Activated CD4-positive, alpha-beta memory T cell treated with anti-CD3 and anti-CD28 coated beads for 36 hours (primary cell): ENCODE measurements at regions of chr1 and their contacts with region 1.

Region 1: DNA sequence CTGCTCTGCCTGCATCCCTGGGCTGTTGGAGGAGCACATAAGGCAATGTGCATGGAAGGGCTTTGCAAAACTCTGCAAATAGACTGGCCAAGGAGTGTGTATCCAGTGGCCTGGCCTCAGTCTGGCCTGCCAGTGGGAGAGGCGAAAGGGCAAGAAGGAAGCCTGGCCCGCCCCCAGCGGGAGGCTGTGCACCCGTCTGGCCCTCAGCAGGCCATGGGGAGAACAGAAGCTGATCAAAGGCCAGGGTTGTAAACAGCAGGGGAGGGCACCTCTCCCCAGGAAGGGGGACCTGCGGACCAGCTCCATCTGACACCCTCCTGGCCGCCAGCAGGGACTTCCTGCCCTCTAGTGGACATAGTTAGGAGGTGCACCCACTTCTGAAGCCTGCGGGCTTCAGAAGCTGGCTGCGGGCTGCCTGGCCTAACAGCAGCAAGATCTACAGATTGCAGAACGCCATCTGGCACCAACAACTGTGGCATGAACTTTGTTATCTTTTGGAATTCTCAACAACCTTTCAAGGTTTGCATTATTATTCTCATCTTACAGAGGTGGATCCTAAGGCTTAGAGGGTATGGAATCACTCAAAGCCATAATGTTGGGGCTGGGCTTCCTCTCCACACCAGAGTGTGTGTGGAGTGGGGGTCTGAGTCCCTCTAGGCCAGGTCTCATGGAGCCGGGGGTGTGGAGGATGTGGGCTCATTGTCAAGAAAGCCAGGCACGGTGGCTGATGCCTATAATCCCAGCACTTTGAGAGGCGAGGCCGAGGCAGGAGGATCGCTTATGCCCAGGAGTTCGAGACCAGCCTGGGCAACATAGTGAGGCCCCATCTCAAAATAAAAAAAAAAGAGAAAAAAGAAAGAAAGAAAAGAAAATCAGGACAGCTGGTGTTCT is 18.9 kb upstream of the CDK18 start:
- DNase-seq: peak; percentile 75
- H3K4me3 Mint-ChIP-seq: peak overlapping the region; percentile 25
- H3K27ac Mint-ChIP-seq: no peak overlapping the region
- H3K4me1 Mint-ChIP-seq: peaks cover 10% of the 10 kb centered on the region
- H3K27me3 Mint-ChIP-seq: peaks cover 22% of the 10 kb centered on the region

Region 2: GRCh38 chr1:205273551-205273982 is 212.0 kb before region 1 on chr1:
- CTCF ChIA-PET with region 1: interaction called, 26 read pairs
- POLR2A ChIA-PET with region 1: no interaction called
- intact Hi-C with region 1: loop called (anchors 5 kb)
- DNase-seq: peak; percentile 91
- H3K4me3 Mint-ChIP-seq: no peak overlapping the region
- H3K27ac Mint-ChIP-seq: no peak overlapping the region
- H3K4me1 Mint-ChIP-seq: peaks cover 30% of the 10 kb centered on the region
- H3K27me3 Mint-ChIP-seq: no peaks in the 10 kb centered on the region

Region 3: GRCh38 chr1:205354259-205354904 is 131.2 kb before region 1 on chr1:
- CTCF ChIA-PET with region 1: interaction called, 133 read pairs
- POLR2A ChIA-PET with region 1: no interaction called
- intact Hi-C with region 1: loop called (anchors 1 kb)
- DNase-seq: peak; percentile 68
- H3K4me3 Mint-ChIP-seq: no peak overlapping the region
- H3K27ac Mint-ChIP-seq: no peak overlapping the region
- H3K4me1 Mint-ChIP-seq: no peaks in the 10 kb centered on the region
- H3K27me3 Mint-ChIP-seq: peaks cover 13% of the 10 kb centered on the region

Region 4: GRCh38 chr1:205416322-205416721 is 69.3 kb before region 1 on chr1:
- CTCF ChIA-PET with region 1: interaction called, 12 read pairs
- POLR2A ChIA-PET with region 1: no interaction called
- intact Hi-C with region 1: no loop called
- DNase-seq: no peak
- H3K4me3 Mint-ChIP-seq: no peak overlapping the region
- H3K27ac Mint-ChIP-seq: no peak overlapping the region
- H3K4me1 Mint-ChIP-seq: no peaks in the 10 kb centered on the region
- H3K27me3 Mint-ChIP-seq: peaks cover 4% of the 10 kb centered on the region

Region 5: GRCh38 chr1:205440476-205441317 is 44.9 kb before region 1 on chr1:
- CTCF ChIA-PET with region 1: interaction called, 51 read pairs
- POLR2A ChIA-PET with region 1: no interaction called
- intact Hi-C with region 1: loop called (anchors 5 kb)
- DNase-seq: peak; percentile 87
- H3K4me3 Mint-ChIP-seq: peak overlapping the region; percentile 73
- H3K27ac Mint-ChIP-seq: peak overlapping the region; percentile 83
- H3K4me1 Mint-ChIP-seq: peaks cover 20% of the 10 kb centered on the region
- H3K27me3 Mint-ChIP-seq: peaks cover 4% of the 10 kb centered on the region

Region 6: DNA sequence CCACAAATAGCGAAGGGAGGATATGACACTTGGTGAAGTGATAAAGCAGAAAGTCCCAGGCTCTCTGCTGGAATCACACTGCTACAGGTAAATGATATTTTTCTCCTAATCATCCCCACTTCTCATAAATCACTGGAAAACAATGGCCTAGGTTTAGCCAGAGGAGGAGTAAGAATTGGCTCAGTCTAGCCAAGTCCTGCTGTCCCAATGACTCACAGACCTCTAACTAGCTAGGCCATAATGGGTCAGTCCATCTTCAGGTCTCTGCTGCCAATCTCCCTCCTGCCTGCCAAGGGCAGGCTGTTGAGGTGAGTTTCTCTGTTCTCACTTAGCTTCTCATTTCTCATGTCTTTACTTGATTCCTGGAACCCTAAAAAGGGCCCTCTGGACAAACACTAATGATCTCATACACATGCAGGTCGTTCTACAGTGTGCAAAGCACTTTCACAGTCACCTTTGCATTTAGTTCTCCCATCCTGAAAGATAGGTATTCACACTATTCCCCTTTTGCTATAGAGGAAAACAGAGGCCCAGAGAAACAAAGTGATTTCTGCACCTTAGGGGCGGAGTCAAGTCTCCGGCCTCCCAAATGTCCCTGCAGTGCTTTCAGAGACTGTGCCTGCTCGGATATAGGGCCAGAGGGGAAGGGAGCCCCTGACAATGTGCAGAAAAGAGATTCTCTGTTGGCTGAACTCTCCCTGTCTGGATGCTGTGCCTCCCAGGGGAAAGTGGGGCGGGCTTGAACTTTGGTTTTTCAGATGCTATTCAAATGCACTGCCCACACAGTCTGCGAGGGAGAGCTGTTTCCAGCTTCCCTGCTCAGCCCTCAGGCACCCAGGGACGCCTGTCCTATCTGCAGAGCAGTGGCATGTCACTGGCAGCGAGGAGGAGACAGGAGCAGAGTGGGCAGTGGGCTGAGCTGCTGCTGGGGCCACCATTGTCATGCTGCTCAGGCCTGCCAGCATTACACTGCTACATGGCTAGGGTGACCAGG is 15.0 kb after region 1 on chr1:
- CTCF ChIA-PET with region 1: interaction called, 45 read pairs
- POLR2A ChIA-PET with region 1: no interaction called
- intact Hi-C with region 1: no loop called
- DNase-seq: no peak
- H3K4me3 Mint-ChIP-seq: no peak overlapping the region
- H3K27ac Mint-ChIP-seq: no peak overlapping the region
- H3K4me1 Mint-ChIP-seq: peaks cover 8% of the 10 kb centered on the region
- H3K27me3 Mint-ChIP-seq: peaks cover 1% of the 10 kb centered on the region

Region 7: DNA sequence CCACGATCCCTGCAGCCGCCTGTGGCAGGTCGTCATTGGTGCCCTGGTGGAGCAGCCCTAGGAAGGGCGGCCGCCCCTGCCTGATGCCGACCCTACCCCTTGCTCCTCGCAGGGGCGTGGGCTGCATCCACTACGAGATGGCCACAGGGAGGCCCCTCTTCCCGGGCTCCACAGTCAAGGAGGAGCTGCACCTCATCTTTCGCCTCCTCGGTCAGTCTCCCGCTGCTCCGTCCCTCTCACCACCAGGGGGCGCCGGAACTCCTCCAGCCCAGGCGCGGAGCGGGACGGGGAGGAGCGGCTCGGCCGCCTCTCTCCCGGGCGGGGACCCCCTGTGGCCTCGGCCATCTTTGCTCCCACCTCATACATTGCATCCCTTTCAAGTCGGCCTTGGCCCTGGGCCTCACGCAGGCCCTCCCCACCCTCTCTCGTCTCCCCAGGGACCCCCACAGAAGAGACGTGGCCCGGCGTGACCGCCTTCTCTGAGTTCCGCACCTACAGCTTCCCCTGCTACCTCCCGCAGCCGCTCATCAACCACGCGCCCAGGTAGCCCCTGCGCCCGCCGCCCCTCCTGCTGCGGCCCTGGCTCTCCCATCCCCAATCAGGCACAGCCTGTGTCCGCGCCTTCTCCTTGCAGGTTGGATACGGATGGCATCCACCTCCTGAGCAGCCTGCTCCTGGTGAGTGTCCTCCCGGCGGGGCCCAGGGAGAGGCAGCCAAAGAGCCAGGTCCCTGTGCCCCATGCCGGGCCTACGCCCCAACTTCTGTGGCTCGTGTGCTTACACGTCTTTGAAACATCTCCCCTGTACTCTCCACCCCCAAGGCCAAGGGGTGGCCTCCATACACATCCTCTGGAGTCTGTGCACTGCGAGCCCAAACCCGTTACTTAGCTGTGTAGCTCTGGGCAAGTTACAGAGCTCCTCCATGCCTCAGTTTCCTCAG is 43.6 kb after region 1 on chr1:
- CTCF ChIA-PET with region 1: interaction called, 321 read pairs
- POLR2A ChIA-PET with region 1: interaction called, 8 read pairs
- intact Hi-C with region 1: loop called (anchors 1 kb)
- DNase-seq: peak; percentile 85
- H3K4me3 Mint-ChIP-seq: peak overlapping the region; percentile 37
- H3K27ac Mint-ChIP-seq: no peak overlapping the region
- H3K4me1 Mint-ChIP-seq: peaks cover 4% of the 10 kb centered on the region
- H3K27me3 Mint-ChIP-seq: peaks cover 7% of the 10 kb centered on the region